ENCODE measurements at regions of chr6 and their contacts with region 1.

Region 1: GRCh38 chr6:56851541-56852259 is 103.2 kb upstream of the BEND6 start:
- DNase-seq: peak in 1 of 2 donors; percentile 49
- ATAC-seq: peak; percentile 86 to 96
- H3K4me3 ChIP-seq: peak overlapping the region; percentile 51 to 52 (median 52)
- H3K27ac ChIP-seq: peak overlapping the region; percentile 14 to 51 (median 30)
- H3K4me1 ChIP-seq: peaks cover 8 to 19% of the 10 kb centered on the region in 2 donors
- H3K27me3 ChIP-seq: no peaks in the 10 kb centered on the region
- CTCF ChIP-seq: peak; percentile 58 to 71 (median 65)
- POLR2A ChIP-seq: no peak

Region 2: GRCh38 chr6:56764081-56764566 is 87.6 kb before region 1 on chr6:
- in situ Hi-C with region 1: loop called in 3 of 4 experiments (anchors 5 to 10 kb)
- intact Hi-C with region 1: no loop called
- DNase-seq: no peak
- ATAC-seq: peak in 1 of 2 donors; percentile 79
- H3K4me3 ChIP-seq: no peak overlapping the region
- H3K27ac ChIP-seq: peak overlapping the region; percentile 6 to 88 (median 72)
- H3K4me1 ChIP-seq: peaks cover 54 to 73% of the 10 kb centered on the region in 2 donors
- H3K27me3 ChIP-seq: no peaks in the 10 kb centered on the region
- CTCF ChIP-seq: peak in 4 of 5 experiments; percentile 23 to 51 (median 40)
- POLR2A ChIP-seq: no peak

Measured in gastrocnemius medialis (tissue), 4 donors.